ENCODE measurements at regions of chr17 and their contacts with region 1.

Region 1: DNA sequence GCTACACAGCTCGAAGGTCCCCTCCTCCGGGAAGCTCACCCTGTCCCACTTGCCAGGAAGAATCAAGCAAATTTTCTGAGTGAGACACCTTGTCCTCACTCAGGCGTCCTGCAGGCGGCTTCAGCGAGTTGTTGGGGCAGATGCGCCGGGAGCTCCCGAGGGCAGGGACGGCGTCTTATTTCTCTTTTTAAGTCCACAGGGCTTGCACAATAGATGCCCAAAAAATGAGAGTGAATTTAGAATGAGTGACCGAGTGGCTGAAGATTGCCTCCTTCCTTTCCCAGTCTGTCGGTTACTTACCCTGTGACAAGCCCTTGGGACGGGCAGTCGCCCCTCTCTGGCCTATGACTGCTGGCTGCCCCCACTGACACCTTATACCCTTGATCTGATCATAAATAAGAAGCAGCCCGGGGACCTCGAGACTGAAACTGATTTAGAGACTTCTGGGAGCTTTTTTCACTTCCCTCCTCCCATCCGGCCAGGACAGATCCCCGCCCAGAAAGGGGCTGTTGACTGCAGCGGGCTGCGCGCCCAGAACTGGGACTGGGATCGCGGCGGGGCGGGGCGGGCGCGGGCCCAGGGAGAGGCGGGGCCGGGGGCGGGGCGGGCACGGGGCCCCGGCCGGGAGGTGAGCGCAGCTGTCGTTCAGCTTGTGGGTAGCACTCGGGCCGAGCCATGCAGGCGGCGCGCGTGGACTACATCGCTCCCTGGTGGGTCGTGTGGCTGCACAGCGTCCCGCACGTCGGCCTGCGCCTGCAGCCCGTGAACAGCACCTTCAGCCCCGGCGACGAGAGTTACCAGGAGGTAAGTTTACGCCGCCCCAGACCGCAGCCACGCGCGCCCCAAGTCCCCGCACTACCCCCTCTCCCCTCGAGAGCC is at the start of gene TTYH2:
- DNase-seq: peak; percentile 75
- H3K4me3 Mint-ChIP-seq: peak within 1 kb of the TSS; percentile 86
- H3K27ac Mint-ChIP-seq: peak within 1 kb of the TSS; percentile 77
- H3K4me1 Mint-ChIP-seq: peaks cover 43% of the 10 kb centered on the region
- H3K27me3 Mint-ChIP-seq: no peaks in the 10 kb centered on the region
- total RNA-seq, gene TTYH2: 17.0 and 19.6 TPM in 2 replicates

Region 2: DNA sequence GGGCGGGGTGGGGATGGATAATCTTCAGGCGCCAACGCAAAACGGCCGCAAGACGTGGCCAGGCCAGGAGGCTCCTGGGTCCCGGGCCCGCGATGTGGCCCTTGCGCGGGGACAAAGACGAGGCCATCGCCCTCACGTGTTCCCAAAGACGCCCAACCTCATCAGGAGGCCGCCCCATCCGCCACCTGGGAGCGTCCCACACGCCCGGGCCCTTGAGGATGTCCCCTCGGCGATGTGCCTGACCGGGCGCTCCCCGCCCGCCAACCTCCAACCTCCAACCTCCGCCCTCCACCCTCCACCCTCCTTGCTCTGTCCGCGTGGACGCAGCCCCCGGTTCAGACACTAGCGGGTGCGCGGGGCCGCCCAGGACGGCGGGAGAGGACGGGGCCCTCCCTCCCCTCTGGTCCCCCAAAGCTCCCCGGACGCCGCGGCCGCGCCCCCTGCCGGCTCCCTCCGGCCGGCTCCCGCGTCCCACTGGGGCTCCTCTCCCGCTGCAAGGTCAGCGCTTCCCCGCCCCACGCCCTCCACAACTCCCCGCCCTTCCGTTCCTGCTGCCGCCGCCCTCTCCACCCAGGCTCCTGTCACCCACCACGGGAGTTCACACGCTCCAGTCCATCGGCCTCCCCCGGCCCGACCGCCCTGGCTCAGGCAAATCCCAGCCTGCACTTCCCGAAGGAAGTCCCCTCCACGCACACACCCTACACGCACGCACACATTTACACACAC is 260.5 kb before region 1 on chr17:
- intact Hi-C with region 1: no loop called
- DNase-seq: no peak
- H3K4me3 Mint-ChIP-seq: no peak overlapping the region
- H3K27ac Mint-ChIP-seq: no peak overlapping the region
- H3K4me1 Mint-ChIP-seq: no peaks in the 10 kb centered on the region
- H3K27me3 Mint-ChIP-seq: peaks cover 9% of the 10 kb centered on the region

Region 3: GRCh38 chr17:74280093-74280513 is 67.0 kb after region 1 on chr17:
- intact Hi-C with region 1: loop called (anchors 2 kb)
- DNase-seq: peak; percentile 69
- H3K4me3 Mint-ChIP-seq: peak overlapping the region; percentile 9
- H3K27ac Mint-ChIP-seq: peak overlapping the region; percentile 90
- H3K4me1 Mint-ChIP-seq: peaks cover 50% of the 10 kb centered on the region
- H3K27me3 Mint-ChIP-seq: no peaks in the 10 kb centered on the region

Region 4: DNA sequence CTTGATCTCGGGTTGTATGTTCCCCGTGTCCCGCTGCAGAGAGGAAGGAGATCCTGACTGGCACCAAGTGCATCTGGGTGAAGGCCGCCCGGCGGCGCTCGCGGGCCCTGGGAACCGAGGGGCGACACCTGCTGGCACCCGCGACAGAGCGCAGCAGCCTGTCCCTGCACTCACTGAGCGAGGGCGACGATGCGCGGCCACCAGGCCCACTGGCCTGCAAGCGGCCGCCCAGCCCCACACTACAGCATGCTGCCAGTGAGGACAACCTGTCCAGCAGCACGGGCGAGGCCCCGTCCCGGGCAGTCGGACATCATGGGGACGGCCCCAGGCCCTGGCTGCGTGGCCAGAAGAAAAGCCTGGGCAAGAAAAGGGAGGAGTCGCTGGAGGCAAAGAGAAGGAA is 141.0 kb after region 1 on chr17:
- intact Hi-C with region 1: loop called (anchors 2 kb)
- DNase-seq: peak; percentile 55
- H3K4me3 Mint-ChIP-seq: no peak overlapping the region
- H3K27ac Mint-ChIP-seq: no peak overlapping the region
- H3K4me1 Mint-ChIP-seq: peaks cover 7% of the 10 kb centered on the region
- H3K27me3 Mint-ChIP-seq: peaks cover 56% of the 10 kb centered on the region

Measured in activated T-helper 2 cell treated with anti-CD3 and anti-CD28 coated beads, Interferon-gamma antibody, Interleukin-2, Interleukin-4, amounts not matched to agents 10 μg/mL and 5 μg/mL and 100 μg/mL, durations not matched to agents 14 hours and 24 hours and 36 hours (primary cell).